Naive thymus-derived CD4-positive, alpha-beta T cell (primary cell): ENCODE measurements at regions of chr3 and their contacts with region 1.

Region 1: GRCh38 chr3:47475570-47476329 is at the start of gene SCAP:
- DNase-seq: peak; percentile 93 to 99 (median 95)
- ATAC-seq: peak; percentile 97
- H3K4me3 ChIP-seq: peak within 1 kb of the TSS; percentile 69
- H3K4me3 Mint-ChIP-seq: peak within 1 kb of the TSS; percentile 89 to 98 (median 93)
- H3K27ac ChIP-seq: peak within 1 kb of the TSS; percentile 90
- H3K27ac Mint-ChIP-seq: peak within 1 kb of the TSS; percentile 86 to 96 (median 93)
- H3K4me1 ChIP-seq: peaks cover 19 to 20% of the 10 kb centered on the region in 2 donors
- H3K4me1 Mint-ChIP-seq: peaks cover 20 to 54% (median 36%) of the 10 kb centered on the region in 7 donors
- H3K27me3 ChIP-seq: no peaks in the 10 kb centered on the region
- H3K27me3 Mint-ChIP-seq: no peaks in the 10 kb centered on the region
- total RNA-seq, gene SCAP: 80.6 to 95.4 (median 92.9) TPM

Region 2: DNA sequence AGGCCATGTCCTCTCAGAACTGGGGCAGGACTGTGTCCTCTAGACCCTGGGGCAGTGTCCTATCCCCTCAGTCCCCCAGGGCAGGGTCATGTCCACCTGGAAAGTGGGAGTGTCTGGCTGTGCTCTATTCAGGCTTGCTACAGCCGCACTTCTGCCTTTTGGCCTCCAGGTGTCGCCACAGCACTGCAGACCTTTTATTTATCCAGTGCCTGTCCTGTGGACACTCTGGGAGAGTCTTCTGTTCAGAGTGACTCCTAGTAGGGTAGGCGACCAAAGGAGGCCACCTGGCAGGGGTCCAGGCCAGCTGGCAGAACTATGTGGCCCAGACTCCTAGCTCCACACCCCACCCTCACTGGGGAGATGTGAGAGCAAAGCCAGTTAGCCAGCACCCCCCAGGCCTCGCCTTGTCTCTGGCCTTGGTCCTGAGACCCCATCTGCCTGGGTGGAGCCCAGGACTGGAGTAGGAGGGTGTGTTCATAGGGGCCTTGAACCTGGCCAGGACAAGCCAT is 770.7 kb before region 1 on chr3:
- CTCF ChIA-PET with region 1: no interaction called
- POLR2A ChIA-PET with region 1: no interaction called
- intact Hi-C with region 1: loop called in 1 of 2 experiments (anchors 5 kb)
- DNase-seq: peak; percentile 45 to 71 (median 63)
- ATAC-seq: peak; percentile 87
- H3K4me3 ChIP-seq: no peak overlapping the region
- H3K4me3 Mint-ChIP-seq: no peak overlapping the region
- H3K27ac ChIP-seq: no peak overlapping the region
- H3K27ac Mint-ChIP-seq: peak overlapping the region in 1 of 9 donors; percentile 36
- H3K4me1 ChIP-seq: peaks cover 0 to 19% of the 10 kb centered on the region in 2 donors
- H3K4me1 Mint-ChIP-seq: peaks cover 0 to 29% (median 20%) of the 10 kb centered on the region in 7 donors
- H3K27me3 ChIP-seq: no peaks in the 10 kb centered on the region
- H3K27me3 Mint-ChIP-seq: peaks cover 0 to 25% (median 0%) of the 10 kb centered on the region in 5 donors

Region 3: DNA sequence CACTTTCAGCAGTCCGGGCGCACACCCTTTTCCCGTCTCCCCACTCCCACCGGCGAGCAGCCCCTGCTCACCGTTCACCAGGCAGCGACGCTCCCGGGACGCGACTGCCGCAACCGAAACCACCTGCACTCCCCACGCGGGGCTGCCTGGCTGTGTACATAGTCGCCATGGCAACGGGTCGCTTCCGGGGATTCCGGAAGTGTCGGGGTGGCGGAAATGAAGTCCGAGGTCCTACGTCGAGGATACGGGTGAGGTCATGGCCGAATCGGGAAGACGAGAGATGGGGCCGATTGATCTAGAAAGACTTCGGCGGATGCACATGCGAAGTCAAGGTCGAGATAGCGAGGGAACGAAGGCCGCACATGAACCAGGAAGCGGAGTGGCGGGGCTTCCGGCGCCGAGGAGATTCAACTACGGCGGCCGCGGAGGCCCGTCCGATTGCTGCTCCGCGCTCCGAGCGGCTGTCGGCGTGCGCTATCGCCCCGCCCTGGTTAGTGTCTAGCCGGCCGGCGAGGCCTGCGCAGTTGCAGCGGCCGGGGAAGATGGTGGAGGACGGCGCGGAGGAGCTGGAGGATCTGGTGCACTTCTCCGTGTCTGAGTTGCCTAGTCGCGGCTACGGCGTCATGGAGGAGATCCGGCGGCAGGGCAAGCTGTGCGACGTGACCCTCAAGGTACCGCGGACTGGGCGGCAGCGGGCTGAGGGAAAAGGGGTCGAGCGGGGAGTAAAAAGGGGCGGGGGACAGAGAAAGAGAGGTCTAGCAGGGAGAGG is 193.1 kb before region 1 on chr3 and contains the starts of genes KIF9 and KLHL18:
- CTCF ChIA-PET with region 1: no interaction called
- POLR2A ChIA-PET with region 1: no interaction called
- intact Hi-C with region 1: loop called in 1 of 2 experiments (anchors 1 kb)
- DNase-seq: peak; percentile 86 to 98 (median 97)
- ATAC-seq: peak; percentile 91
- H3K4me3 ChIP-seq: peak within 1 kb of the TSS; percentile 76
- H3K4me3 Mint-ChIP-seq: peak within 1 kb of the TSS; percentile 89 to 100 (median 98)
- H3K27ac ChIP-seq: peak within 1 kb of the TSS; percentile 93
- H3K27ac Mint-ChIP-seq: peak within 1 kb of the TSS; percentile 98 to 100 (median 99)
- H3K4me1 ChIP-seq: peaks cover 14 to 23% of the 10 kb centered on the region in 2 donors
- H3K4me1 Mint-ChIP-seq: peaks cover 29 to 56% (median 43%) of the 10 kb centered on the region in 7 donors
- H3K27me3 ChIP-seq: no peaks in the 10 kb centered on the region
- H3K27me3 Mint-ChIP-seq: no peaks in the 10 kb centered on the region
- total RNA-seq, gene KIF9: 2.7 to 15.0 (median 4.1) TPM
- total RNA-seq, gene KLHL18: 21.7 to 47.5 (median 24.5) TPM

Region 4: DNA sequence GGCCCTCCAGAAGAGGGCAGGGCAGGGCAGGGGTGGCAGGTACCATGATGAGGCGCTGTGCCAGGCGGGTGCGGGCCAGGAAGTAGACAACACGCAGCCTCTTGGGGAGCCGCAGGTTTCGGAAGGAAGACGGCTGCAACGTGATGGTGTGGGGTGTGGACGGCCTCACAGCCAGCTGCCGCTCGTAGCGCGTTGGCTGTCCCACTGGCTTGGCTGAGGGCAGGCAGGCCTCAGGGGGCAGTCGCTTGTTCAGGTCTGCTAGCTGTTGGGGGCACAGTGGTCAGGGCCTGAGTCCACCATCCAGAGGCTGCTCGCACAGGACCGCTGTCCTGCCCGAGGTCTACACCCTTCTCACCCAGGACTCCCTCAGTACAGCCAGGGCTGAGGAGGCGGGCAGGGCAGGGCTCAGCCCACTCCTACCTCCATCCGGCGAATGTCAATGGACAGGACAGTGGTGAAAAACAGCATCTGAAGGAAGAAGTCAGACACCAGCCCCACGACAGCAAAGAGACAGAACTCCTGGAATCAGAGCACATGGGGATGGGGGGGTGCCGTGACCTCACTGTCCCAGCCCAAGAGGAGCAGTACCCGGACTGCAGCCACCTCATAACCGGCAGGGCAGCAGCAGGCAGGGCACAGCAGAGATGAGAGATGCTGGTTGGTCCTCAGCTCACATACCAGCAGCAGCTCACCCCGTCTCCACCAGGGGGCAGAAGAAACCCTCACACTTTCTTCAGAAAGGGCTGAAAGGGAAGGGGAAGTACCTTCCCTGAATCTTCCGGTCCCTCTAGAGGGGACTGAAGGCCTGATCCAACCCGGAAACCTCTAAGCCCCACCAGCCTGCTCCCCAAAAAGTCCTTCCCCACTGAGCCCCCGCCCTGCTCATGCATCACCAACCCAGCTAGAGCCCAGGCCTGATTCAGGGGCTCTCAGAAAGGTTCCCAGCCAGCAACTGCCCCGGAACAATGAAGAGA is 55.0 kb before region 1 on chr3:
- CTCF ChIA-PET with region 1: interaction called, 38 read pairs
- POLR2A ChIA-PET with region 1: interaction called, 21 read pairs
- intact Hi-C with region 1: loop called (anchors 1 kb)
- DNase-seq: peak; percentile 66 to 90 (median 88)
- ATAC-seq: peak; percentile 98
- H3K4me3 ChIP-seq: peak overlapping the region; percentile 29
- H3K4me3 Mint-ChIP-seq: peak overlapping the region; percentile 56 to 86 (median 78)
- H3K27ac ChIP-seq: peak overlapping the region; percentile 79
- H3K27ac Mint-ChIP-seq: peak overlapping the region; percentile 90 to 100 (median 99)
- H3K4me1 ChIP-seq: peaks cover 8 to 15% of the 10 kb centered on the region in 2 donors
- H3K4me1 Mint-ChIP-seq: peaks cover 0 to 22% (median 10%) of the 10 kb centered on the region in 7 donors
- H3K27me3 ChIP-seq: no peaks in the 10 kb centered on the region
- H3K27me3 Mint-ChIP-seq: no peaks in the 10 kb centered on the region

Region 5: GRCh38 chr3:47791193-47791855 is 315.6 kb after region 1 on chr3:
- CTCF ChIA-PET with region 1: no interaction called
- POLR2A ChIA-PET with region 1: no interaction called
- intact Hi-C with region 1: loop called in 1 of 2 experiments (anchors 2 kb)
- DNase-seq: no peak
- ATAC-seq: no peak
- H3K4me3 ChIP-seq: no peak overlapping the region
- H3K4me3 Mint-ChIP-seq: no peak overlapping the region
- H3K27ac ChIP-seq: no peak overlapping the region
- H3K27ac Mint-ChIP-seq: peak overlapping the region in 1 of 9 donors; percentile 14
- H3K4me1 ChIP-seq: no peaks in the 10 kb centered on the region
- H3K4me1 Mint-ChIP-seq: peaks cover 0 to 5% (median 3%) of the 10 kb centered on the region in 7 donors
- H3K27me3 ChIP-seq: no peaks in the 10 kb centered on the region
- H3K27me3 Mint-ChIP-seq: no peaks in the 10 kb centered on the region

Region 6: DNA sequence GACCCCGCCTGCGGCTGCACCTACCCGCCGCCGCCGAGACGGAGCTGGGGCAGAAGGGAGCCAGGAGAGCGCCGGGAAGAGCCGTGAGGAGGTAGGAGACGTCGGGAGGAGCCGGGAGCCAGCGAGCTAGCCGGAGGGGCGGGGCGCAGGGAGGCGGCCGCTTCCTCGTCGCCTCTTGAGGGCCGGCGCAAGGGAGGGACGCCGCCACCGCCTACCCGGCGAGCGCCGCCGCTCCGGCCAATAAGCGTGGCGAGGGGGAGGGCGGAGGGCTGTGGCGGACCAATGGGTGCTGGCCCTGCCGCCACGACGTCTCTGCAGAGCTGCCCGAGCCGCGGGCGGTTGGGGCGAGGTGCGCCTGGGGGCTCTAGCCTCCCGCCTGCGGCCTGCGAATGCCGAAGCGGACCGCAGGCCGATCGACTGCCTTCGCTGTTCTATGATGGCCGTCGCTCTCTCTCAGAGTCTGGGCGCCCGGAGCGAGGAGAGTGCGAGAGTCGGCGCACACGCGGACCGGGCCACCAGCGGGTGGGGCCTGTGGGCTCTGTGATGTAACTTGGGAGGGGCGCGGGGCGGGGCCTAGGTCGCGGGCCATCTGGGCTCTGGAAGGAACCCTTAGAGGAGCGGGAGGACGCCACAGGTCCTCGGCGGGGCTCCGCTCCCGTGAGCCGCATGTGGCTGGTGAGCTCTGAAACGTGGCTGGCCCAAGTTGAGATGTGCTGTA is 613.2 kb after region 1 on chr3:
- CTCF ChIA-PET with region 1: no interaction called
- POLR2A ChIA-PET with region 1: interaction called, 3 read pairs
- intact Hi-C with region 1: loop called in 1 of 2 experiments (anchors 2 kb)
- DNase-seq: peak; percentile 89 to 96 (median 94)
- ATAC-seq: peak; percentile 97
- H3K4me3 ChIP-seq: peak overlapping the region; percentile 85
- H3K4me3 Mint-ChIP-seq: peak overlapping the region; percentile 90 to 99 (median 96)
- H3K27ac ChIP-seq: peak overlapping the region; percentile 95
- H3K27ac Mint-ChIP-seq: peak overlapping the region; percentile 71 to 99 (median 98)
- H3K4me1 ChIP-seq: peaks cover 7 to 11% of the 10 kb centered on the region in 2 donors
- H3K4me1 Mint-ChIP-seq: peaks cover 14 to 33% (median 29%) of the 10 kb centered on the region in 7 donors
- H3K27me3 ChIP-seq: no peaks in the 10 kb centered on the region
- H3K27me3 Mint-ChIP-seq: peaks cover 0 to 18% (median 0%) of the 10 kb centered on the region in 5 donors